ENCODE measurements at regions of chr7 and their contacts with region 1.

Region 1: GRCh38 chr7:148575640-148576411 is 14.7 kb upstream of the C7orf33 start:
- DNase-seq: peak; percentile 24 to 79 (median 60)
- ATAC-seq: peak; percentile 75 to 82 (median 80)
- H3K4me3 ChIP-seq: no peak overlapping the region
- H3K4me3 Mint-ChIP-seq: no peak overlapping the region
- H3K27ac ChIP-seq: no peak overlapping the region
- H3K27ac Mint-ChIP-seq: no peak overlapping the region
- H3K4me1 ChIP-seq: peaks cover 0 to 3% of the 10 kb centered on the region in 2 experiments
- H3K4me1 Mint-ChIP-seq: peaks cover 0 to 3% (median 2%) of the 10 kb centered on the region in 3 donors
- H3K27me3 ChIP-seq: no peaks in the 10 kb centered on the region
- H3K27me3 Mint-ChIP-seq: peaks cover 1 to 4% of the 10 kb centered on the region in 2 donors

Region 2: DNA sequence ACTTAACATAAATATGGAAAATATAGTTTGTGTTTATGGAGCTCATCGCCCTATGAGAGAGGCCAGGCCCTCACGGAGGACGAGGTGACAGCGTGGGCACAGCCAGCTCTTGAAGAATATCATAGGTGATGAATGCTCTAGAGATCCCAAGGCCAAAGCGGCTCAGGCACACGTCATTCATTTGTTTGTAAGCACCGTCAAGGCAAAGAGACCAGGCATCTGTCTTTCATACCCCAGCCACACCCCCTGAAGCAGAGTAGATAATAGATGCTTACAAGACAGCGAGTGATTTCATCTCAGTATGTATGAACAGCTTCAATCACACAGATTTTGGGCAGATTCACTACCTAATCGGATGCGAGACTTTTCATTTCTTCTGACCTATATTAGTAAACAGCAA is 227.3 kb before region 1 on chr7:
- CTCF ChIA-PET with region 1: no interaction called
- POLR2A ChIA-PET with region 1: no interaction called
- DNase-seq: no peak
- ATAC-seq: no peak
- H3K4me3 ChIP-seq: no peak overlapping the region
- H3K4me3 Mint-ChIP-seq: no peak overlapping the region
- H3K27ac ChIP-seq: no peak overlapping the region
- H3K27ac Mint-ChIP-seq: no peak overlapping the region
- H3K4me1 ChIP-seq: no peaks in the 10 kb centered on the region
- H3K4me1 Mint-ChIP-seq: no peaks in the 10 kb centered on the region
- H3K27me3 ChIP-seq: no peaks in the 10 kb centered on the region
- H3K27me3 Mint-ChIP-seq: peaks cover 5 to 29% of the 10 kb centered on the region in 2 donors

Region 3: DNA sequence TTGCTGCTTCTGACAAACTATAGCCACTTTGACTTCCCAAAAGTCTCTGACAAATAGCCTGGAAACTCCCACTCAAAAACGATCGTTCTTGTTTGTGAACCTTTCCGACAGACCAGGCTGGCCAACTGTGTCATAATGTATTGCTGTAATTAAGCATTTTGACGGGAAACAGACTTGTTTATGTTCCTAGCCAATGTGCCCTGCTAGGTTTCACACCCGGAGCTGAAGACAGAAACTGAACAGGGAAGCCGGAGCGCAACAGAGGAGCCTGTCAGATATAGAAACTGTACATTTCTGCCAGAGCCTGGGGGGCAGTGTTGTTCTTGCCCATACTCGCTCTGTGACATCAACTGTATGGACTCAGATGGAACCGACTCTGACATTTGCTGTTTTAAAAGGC is 40.6 kb before region 1 on chr7:
- CTCF ChIA-PET with region 1: no interaction called
- POLR2A ChIA-PET with region 1: no interaction called
- DNase-seq: peak in 15 of 35 experiments; percentile 2 to 25 (median 4)
- ATAC-seq: peak in 3 of 4 experiments; percentile 37 to 74 (median 58)
- H3K4me3 ChIP-seq: no peak overlapping the region
- H3K4me3 Mint-ChIP-seq: peak overlapping the region; percentile 17 to 28 (median 22)
- H3K27ac ChIP-seq: no peak overlapping the region
- H3K27ac Mint-ChIP-seq: no peak overlapping the region
- H3K4me1 ChIP-seq: peaks cover 0 to 4% of the 10 kb centered on the region in 2 experiments
- H3K4me1 Mint-ChIP-seq: peaks cover 8 to 10% (median 8%) of the 10 kb centered on the region in 3 donors
- H3K27me3 ChIP-seq: peaks cover 0 to 15% of the 10 kb centered on the region in 2 experiments
- H3K27me3 Mint-ChIP-seq: peaks cover 13 to 22% of the 10 kb centered on the region in 2 donors

Region 4: DNA sequence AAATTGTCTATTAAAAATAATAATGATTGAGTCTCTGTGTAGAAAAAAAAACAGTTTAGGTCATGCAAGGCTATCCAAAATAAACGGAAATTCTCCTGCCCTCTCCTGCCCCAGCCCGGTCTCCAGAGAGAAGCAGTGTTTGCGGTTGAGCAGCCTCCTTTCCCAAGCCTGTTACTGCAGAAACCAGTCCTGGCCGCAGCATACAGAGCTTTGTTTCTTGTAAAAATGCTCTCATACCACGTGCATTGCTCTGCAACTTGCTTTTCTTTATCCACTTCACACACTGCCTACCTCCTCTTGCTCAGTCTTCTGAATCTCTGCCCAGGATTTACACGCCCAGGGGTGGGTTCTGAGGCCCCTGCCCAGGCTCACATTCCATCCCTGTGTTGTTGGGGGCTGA is 88.5 kb after region 1 on chr7:
- CTCF ChIA-PET with region 1: no interaction called
- POLR2A ChIA-PET with region 1: no interaction called
- DNase-seq: no peak
- ATAC-seq: no peak
- H3K4me3 ChIP-seq: no peak overlapping the region
- H3K4me3 Mint-ChIP-seq: no peak overlapping the region
- H3K27ac ChIP-seq: no peak overlapping the region
- H3K27ac Mint-ChIP-seq: no peak overlapping the region
- H3K4me1 ChIP-seq: no peaks in the 10 kb centered on the region
- H3K4me1 Mint-ChIP-seq: peaks cover 1 to 4% (median 2%) of the 10 kb centered on the region in 3 donors
- H3K27me3 ChIP-seq: no peaks in the 10 kb centered on the region
- H3K27me3 Mint-ChIP-seq: no peaks in the 10 kb centered on the region

Region 5: GRCh38 chr7:148727501-148728278 is 151.9 kb after region 1 on chr7:
- CTCF ChIA-PET with region 1: interaction called in 1 of 2 experiments, 3 read pairs
- POLR2A ChIA-PET with region 1: interaction called in 1 of 2 experiments, 10 read pairs
- DNase-seq: no peak
- ATAC-seq: peak in 2 of 4 experiments; percentile 16 to 24
- H3K4me3 ChIP-seq: no peak overlapping the region
- H3K4me3 Mint-ChIP-seq: peak overlapping the region in 1 of 3 donors; percentile 6
- H3K27ac ChIP-seq: no peak overlapping the region
- H3K27ac Mint-ChIP-seq: peak overlapping the region; percentile 17 to 36
- H3K4me1 ChIP-seq: peaks cover 23 to 30% of the 10 kb centered on the region in 2 experiments
- H3K4me1 Mint-ChIP-seq: peaks cover 71 to 78% (median 76%) of the 10 kb centered on the region in 3 donors
- H3K27me3 ChIP-seq: no peaks in the 10 kb centered on the region
- H3K27me3 Mint-ChIP-seq: no peaks in the 10 kb centered on the region

Measured in T-cell (primary cell).